ENCODE measurements at regions of chr1 and their contacts with region 1.

Region 1: GRCh38 chr1:117284399-117285215 is 73.9 kb upstream of the VTCN1 start:
- DNase-seq: peak; percentile 39 to 81
- H3K4me3 ChIP-seq: no peak overlapping the region
- H3K27ac ChIP-seq: no peak overlapping the region
- H3K4me1 ChIP-seq: peaks cover 10% of the 10 kb centered on the region
- H3K27me3 ChIP-seq: no peaks in the 10 kb centered on the region
- CTCF ChIP-seq: peak; percentile 98

Region 2: GRCh38 chr1:116990612-116991151 is 293.9 kb before region 1 on chr1:
- CTCF ChIA-PET with region 1: no interaction called
- POLR2A ChIA-PET with region 1: no interaction called
- intact Hi-C with region 1: no loop called
- DNase-seq: no peak
- H3K4me3 ChIP-seq: no peak overlapping the region
- H3K27ac ChIP-seq: no peak overlapping the region
- H3K4me1 ChIP-seq: no peaks in the 10 kb centered on the region
- H3K27me3 ChIP-seq: no peaks in the 10 kb centered on the region
- CTCF ChIP-seq: no peak

Region 3: DNA sequence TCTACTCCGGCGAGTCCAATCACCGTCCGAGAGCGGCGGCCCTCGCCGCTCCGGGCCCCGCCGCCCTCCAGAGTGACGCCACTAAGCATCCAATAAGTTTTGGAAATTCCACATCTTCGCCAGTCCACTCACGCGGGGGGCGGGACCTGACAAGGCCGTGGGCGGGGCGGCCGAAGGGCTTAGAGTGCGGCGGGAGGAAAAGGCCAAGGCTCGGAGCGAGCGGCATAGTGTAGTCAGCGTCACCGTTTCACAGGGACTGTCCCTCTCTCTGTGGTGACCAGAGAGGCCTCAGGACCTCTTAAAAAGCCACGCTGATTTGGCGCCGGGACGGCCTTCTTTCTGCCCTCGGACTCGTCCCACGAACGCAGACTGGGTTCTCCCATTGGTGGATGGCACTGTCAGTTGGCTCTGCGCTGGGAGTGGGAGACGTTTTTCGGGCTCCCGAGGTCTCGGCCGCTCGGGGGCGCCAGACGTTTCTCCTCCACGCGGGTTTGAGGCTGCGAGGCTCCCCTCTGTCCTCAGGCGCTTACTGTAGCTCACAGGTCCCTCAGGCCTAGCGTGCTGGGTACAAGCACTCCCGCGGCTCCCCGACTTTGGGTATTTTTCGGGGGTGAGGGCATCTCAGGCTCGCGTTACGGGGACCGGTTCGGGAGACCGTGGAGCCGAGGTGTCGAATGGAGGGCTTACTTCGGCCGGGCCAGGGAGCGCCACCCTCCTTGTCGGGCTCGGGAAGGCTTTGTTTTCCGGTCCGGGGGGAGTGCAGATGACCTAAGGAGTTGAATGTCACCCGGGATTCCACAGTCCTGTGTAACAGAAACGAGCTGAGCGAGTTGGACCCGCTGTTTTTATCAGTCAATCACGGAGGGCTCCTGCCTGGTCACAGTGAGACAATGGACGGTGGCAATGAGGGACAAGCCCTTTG is 162.6 kb before region 1 on chr1:
- CTCF ChIA-PET with region 1: interaction called, 11 read pairs
- POLR2A ChIA-PET with region 1: no interaction called
- intact Hi-C with region 1: loop called (anchors 1 kb)
- DNase-seq: peak; percentile 95 to 98
- H3K4me3 ChIP-seq: peak overlapping the region; percentile 62; the same call in 1 of the 2 replicates
- H3K27ac ChIP-seq: peak overlapping the region; percentile 23; the same call in 1 of the 2 replicates
- H3K4me1 ChIP-seq: peaks cover 7% of the 10 kb centered on the region
- H3K27me3 ChIP-seq: no peaks in the 10 kb centered on the region
- CTCF ChIP-seq: peak; percentile 83

Region 4: GRCh38 chr1:117128323-117129079 is 156.1 kb before region 1 on chr1:
- CTCF ChIA-PET with region 1: interaction called, 22 read pairs
- POLR2A ChIA-PET with region 1: interaction called, 3 read pairs
- intact Hi-C with region 1: loop called (anchors 1 kb)
- DNase-seq: peak in 1 of 2 experiments; percentile 47
- H3K4me3 ChIP-seq: no peak overlapping the region
- H3K27ac ChIP-seq: no peak overlapping the region
- H3K4me1 ChIP-seq: peaks cover 14% of the 10 kb centered on the region; the same call in 1 of the 2 replicates
- H3K27me3 ChIP-seq: no peaks in the 10 kb centered on the region
- CTCF ChIP-seq: peak; percentile 82

Region 5: DNA sequence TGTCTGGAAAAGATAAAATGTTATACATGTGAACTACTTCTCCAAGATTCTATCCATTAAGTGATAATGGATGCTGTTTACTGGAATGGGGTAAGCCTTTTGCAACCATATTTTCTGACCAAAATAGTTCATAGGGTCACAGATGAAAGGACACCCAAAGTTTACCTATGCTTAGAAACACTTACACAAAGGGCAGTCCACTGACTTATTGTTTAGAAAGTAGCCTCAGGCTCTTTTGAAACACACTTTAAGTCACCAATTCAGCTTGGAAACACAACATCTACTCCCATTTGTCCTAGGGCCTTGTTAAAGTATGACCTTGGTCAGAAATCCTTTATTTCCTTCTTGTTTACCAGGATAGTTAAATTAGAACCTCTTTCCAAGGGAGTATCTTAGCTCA is 45.1 kb before region 1 on chr1:
- CTCF ChIA-PET with region 1: no interaction called
- POLR2A ChIA-PET with region 1: no interaction called
- intact Hi-C with region 1: no loop called
- DNase-seq: no peak
- H3K4me3 ChIP-seq: no peak overlapping the region
- H3K27ac ChIP-seq: no peak overlapping the region
- H3K4me1 ChIP-seq: peaks cover 23% of the 10 kb centered on the region
- H3K27me3 ChIP-seq: no peaks in the 10 kb centered on the region
- CTCF ChIP-seq: no peak

Region 6: GRCh38 chr1:117367047-117368018 is 82.7 kb after region 1 on chr1 and contains the start of gene MAN1A2:
- CTCF ChIA-PET with region 1: interaction called, 4 read pairs
- POLR2A ChIA-PET with region 1: interaction called, 25 read pairs
- intact Hi-C with region 1: no loop called
- DNase-seq: peak; percentile 85 to 96
- H3K4me3 ChIP-seq: peak within 1 kb of the TSS; percentile 66
- H3K27ac ChIP-seq: peak within 1 kb of the TSS; percentile 77
- H3K4me1 ChIP-seq: peaks cover 61% of the 10 kb centered on the region
- H3K27me3 ChIP-seq: no peaks in the 10 kb centered on the region
- CTCF ChIP-seq: no peak
- total RNA-seq, gene MAN1A2: 39.8 and 50.3 TPM in 2 replicates